Panc1 (cell line): ENCODE measurements at regions of chr15 and their contacts with region 1.

Region 1: DNA sequence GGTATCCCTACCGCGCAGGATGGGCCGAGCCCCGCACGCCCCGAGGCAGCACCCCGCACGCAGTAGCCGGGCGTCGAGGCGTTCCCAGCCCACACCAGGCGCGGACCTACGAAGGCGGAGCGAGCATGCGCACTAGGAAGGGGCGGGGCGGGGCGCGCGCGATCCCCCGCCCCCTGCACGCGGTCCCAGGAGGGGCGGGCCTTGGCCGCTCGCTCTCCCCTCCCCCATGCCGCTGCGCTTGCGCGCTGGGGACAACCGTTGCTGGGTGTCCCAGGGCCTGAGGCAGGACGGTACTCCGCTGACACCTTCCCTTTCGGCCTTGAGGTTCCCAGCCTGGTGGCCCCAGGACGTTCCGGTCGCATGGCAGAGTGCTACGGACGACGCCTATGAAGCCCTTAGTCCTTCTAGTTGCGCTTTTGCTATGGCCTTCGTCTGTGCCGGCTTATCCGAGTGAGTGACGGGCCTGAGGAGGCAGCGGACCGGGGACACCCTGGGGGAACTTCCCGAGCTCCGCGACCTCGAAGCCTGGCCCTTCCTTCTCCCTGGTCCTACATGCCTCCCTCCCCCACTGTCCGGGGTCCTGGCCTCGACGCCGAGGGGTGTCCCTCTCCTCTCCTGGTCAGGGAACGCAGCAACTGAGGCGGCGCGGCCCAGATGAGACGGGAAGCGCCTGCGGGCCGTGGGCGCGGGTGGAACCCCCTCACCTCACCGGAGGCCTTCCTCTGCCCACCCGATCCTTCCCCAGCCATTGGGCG is at the start of gene SPESP1:
- DNase-seq: no peak
- ATAC-seq: no peak
- H3K4me3 ChIP-seq: no peak within 1 kb of the TSS
- H3K27ac ChIP-seq: no peak within 1 kb of the TSS
- H3K4me1 ChIP-seq: no peaks in the 10 kb centered on the region
- H3K27me3 ChIP-seq: peaks cover 15% of the 10 kb centered on the region
- CTCF ChIP-seq: no peak
- total RNA-seq, gene SPESP1: not detected

Region 2: DNA sequence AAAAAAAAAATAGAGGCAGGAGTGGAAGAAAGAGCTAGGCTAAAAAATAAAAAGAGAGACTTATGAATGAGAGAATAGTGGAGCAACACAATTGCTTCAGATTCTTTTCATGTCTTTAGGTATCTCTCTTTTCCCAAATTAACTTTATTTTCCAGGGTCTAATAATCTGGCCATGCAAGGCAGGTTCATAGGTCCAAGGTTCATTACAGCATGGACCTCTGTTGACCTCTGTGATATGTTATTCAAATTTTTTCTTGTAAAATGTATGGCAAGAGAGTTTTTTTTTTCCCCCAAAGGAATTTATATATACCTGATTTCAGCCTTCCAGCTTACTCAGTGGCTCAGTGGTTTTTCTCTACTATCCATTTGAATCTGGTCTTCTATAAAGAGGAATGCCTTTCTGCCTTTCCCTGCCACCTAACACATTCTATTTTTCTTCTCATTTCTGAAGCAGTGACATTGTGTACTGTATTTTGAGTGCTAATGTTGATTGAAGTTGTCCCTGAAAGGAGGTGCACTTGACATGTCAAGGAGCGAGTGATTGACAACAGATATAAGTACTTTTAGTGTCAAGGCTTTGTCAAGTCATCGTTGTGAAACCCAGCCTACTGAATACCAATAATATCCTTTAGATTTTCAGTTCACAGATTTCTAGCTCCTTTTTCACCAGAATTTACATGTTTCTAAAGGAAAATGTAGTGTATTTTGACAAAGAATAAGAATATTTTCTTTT is 1269.4 kb before region 1 on chr15:
- CTCF ChIA-PET with region 1: no interaction called
- POLR2A ChIA-PET with region 1: no interaction called
- in situ Hi-C with region 1: no loop called
- intact Hi-C with region 1: no loop called
- DNase-seq: no peak
- ATAC-seq: no peak
- H3K4me3 ChIP-seq: no peak overlapping the region
- H3K27ac ChIP-seq: no peak overlapping the region
- H3K4me1 ChIP-seq: no peaks in the 10 kb centered on the region
- H3K27me3 ChIP-seq: no peaks in the 10 kb centered on the region
- CTCF ChIP-seq: no peak

Region 3: DNA sequence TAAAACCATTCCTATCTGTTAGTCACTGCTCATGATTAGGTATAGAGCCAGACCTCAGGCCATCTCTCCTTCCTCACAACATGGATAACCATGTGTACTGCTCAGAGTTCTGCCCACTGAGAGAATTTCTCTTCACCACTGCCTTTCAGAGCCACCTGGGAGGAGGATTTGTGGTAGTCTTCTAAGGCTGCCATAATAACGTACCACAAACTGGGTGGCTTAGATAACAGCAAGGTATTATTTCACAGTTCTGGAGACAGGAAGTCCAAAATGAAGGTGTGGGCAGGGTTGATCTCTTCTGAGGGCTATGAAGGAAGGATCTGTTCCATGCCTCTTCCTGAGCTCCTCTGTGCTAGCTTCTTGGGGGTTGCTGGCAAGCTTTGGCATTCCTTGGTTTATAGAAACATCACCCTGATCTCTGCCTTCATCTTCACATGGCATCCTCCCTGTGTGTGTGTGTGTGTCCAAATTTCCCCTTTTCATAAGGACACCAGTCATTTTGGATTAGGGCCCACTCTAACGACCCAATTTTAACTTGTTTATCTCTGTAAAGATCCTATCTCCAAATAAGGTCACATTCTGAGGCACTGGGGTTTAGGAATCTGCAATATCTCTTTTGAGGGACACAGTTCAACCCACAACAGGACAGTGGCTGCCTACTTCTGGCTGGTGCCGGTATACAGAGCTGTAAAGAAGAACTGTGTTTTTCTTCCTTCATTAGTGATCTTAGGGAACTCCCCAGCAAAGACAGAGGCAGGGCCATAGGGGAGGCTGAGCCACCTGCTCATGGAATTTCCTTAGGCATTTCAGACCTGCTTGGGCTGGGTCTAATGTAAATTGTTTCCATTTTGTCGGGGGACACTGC is 42.0 kb after region 1 on chr15:
- CTCF ChIA-PET with region 1: no interaction called
- POLR2A ChIA-PET with region 1: interaction called, 13 read pairs
- in situ Hi-C with region 1: no loop called
- intact Hi-C with region 1: no loop called
- DNase-seq: no peak
- ATAC-seq: no peak
- H3K4me3 ChIP-seq: no peak overlapping the region
- H3K27ac ChIP-seq: no peak overlapping the region
- H3K4me1 ChIP-seq: no peaks in the 10 kb centered on the region
- H3K27me3 ChIP-seq: no peaks in the 10 kb centered on the region
- CTCF ChIP-seq: no peak